IMR-90 (cell line): ENCODE measurements at regions of chrX and their contacts with region 1.

Region 1: DNA sequence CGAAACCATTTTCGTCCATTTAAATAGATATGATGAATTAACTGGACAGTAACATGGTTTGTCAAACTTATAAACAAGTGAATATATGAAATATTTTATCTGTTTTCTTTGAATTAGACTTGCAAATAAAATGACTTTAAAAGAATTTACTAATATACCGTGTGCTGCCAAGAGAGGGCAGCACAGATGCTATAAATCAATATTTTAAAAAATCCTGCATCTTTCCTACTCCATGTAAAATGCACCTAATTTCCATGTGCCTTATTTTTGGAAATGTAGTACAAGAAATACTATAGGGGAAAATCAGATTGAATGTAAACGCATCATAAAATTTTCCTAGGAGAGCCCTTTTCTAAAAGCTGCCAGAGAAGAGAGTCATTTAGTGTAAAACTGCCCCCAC is 62.2 kb downstream of the PRKX start:
- DNase-seq: peak; percentile 49
- ATAC-seq: peak; percentile 72
- H3K4me3 ChIP-seq: no peak overlapping the region
- H3K27ac ChIP-seq: no peak overlapping the region
- H3K4me1 ChIP-seq: no peaks in the 10 kb centered on the region
- H3K27me3 ChIP-seq: no peaks in the 10 kb centered on the region
- CTCF ChIP-seq: peak; percentile 64
- POLR2A ChIP-seq: no peak
- RAD21 ChIP-seq: peak; percentile 49

Region 2: DNA sequence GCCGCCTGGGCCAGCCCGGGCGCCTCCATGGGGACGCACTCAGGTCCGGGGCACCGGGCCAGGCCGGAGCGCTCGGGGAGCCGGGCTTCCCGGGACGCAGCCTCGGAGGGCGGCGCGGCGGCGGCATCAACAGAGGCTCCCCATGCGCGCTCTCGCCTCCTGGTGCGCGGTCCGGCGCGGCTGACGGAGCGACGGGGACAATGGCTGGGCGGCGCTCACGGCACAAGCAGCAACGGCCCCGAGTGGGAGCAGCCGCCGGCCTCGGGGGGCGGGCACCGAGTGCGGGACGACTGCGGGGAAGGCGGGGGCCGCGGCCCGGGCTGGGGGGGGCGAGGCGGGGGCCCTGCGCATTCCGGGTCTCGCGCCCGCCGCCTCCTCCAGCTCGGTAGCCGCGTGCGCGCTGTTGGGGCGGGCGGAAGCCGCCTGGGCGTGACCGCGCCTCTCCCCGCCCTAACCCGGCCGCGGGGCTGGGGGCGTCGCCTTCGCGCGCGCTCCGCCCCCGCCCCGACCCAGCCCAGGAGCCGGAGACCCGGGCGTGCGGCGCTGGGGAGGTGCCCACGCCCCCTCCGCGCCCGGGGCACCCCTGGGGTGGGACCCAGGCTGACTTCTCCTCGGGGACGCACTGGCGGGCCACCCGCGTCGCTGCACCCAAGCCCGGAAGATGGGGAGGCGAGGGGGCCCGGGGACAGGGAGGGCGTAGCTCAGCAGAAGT is 62.1 kb after region 1 on chrX and contains the start of gene PRKX:
- CTCF ChIA-PET with region 1: no interaction called
- POLR2A ChIA-PET with region 1: no interaction called
- dilution Hi-C with region 1: no loop called
- in situ Hi-C with region 1: no loop called
- intact Hi-C with region 1: loop called (anchors 2 kb)
- DNase-seq: peak; percentile 36
- ATAC-seq: peak; percentile 94
- H3K4me3 ChIP-seq: peak within 1 kb of the TSS; percentile 90
- H3K27ac ChIP-seq: peak within 1 kb of the TSS; percentile 67
- H3K4me1 ChIP-seq: no peaks in the 10 kb centered on the region
- H3K27me3 ChIP-seq: no peaks in the 10 kb centered on the region
- CTCF ChIP-seq: no peak
- POLR2A ChIP-seq: no peak
- RAD21 ChIP-seq: no peak
- total RNA-seq, gene PRKX: 13.1 and 14.9 TPM in 2 replicates

Region 3: GRCh38 chrX:3743801-3744439 is 92.6 kb after region 1 on chrX:
- CTCF ChIA-PET with region 1: no interaction called
- POLR2A ChIA-PET with region 1: no interaction called
- dilution Hi-C with region 1: no loop called
- in situ Hi-C with region 1: no loop called
- intact Hi-C with region 1: loop called (anchors 10 kb)
- DNase-seq: no peak
- ATAC-seq: no peak
- H3K4me3 ChIP-seq: no peak overlapping the region
- H3K27ac ChIP-seq: no peak overlapping the region
- H3K4me1 ChIP-seq: peaks cover 2% of the 10 kb centered on the region; the same call in 1 of the 2 replicates
- H3K27me3 ChIP-seq: no peaks in the 10 kb centered on the region
- CTCF ChIP-seq: no peak
- POLR2A ChIP-seq: no peak
- RAD21 ChIP-seq: no peak

Region 4: GRCh38 chrX:3788509-3789233 is 137.4 kb after region 1 on chrX:
- CTCF ChIA-PET with region 1: no interaction called
- POLR2A ChIA-PET with region 1: no interaction called
- dilution Hi-C with region 1: no loop called
- in situ Hi-C with region 1: no loop called
- intact Hi-C with region 1: loop called (anchors 10 kb)
- DNase-seq: no peak
- ATAC-seq: no peak
- H3K4me3 ChIP-seq: no peak overlapping the region
- H3K27ac ChIP-seq: no peak overlapping the region
- H3K4me1 ChIP-seq: no peaks in the 10 kb centered on the region
- H3K27me3 ChIP-seq: peaks cover 8% of the 10 kb centered on the region
- CTCF ChIP-seq: no peak
- POLR2A ChIP-seq: no peak
- RAD21 ChIP-seq: no peak

Region 5: DNA sequence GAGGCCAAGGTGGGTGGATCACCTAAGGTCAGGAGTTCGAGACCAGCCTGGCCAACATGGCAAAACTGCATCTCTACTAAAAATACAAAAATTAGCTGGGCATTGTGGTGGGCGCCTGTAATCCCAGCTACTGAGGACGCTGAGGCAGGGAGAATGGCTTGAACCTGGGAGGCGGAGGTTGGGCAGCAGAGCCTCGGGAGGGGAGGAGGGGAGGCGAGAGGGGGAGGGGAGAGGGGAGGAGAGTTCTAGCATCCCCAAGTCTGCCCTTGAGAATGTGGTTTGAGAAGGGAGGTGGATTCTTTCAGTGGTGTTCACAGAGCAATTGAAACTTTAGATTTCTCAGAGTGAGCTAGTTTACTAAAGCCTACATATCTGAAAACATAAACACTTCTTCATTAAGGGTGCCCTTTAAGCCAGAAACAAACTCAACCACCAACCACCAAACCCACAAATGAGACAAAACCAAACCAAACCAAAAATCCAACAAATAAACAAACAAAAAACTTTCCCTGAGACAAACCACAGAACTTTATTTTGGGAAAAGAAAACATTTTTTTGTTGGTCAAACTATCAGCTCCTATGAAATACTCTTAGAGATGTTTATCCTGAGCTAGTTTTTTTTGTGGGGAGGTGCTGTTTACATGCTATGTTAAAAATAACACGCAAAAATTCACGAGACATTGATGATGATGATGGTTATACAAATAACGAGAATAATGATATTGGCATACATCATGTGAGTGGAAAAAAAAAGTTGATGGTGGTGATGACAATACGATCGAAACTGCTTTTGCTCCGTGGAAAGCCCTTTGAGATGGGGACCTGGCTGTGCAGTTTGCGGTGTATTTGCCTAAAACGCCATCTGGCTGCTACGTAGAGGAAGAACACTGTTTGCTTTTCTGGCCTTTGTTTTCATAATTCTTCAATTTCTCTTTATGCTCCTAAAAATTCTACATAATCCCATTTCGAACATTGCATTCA is 160.3 kb after region 1 on chrX:
- CTCF ChIA-PET with region 1: interaction called, 4 read pairs
- POLR2A ChIA-PET with region 1: no interaction called
- dilution Hi-C with region 1: no loop called
- in situ Hi-C with region 1: loop called (anchors 10 kb)
- intact Hi-C with region 1: loop called (anchors 2 kb)
- DNase-seq: peak; percentile 58
- ATAC-seq: no peak
- H3K4me3 ChIP-seq: no peak overlapping the region
- H3K27ac ChIP-seq: no peak overlapping the region
- H3K4me1 ChIP-seq: no peaks in the 10 kb centered on the region
- H3K27me3 ChIP-seq: peaks cover 12% of the 10 kb centered on the region
- CTCF ChIP-seq: peak; percentile 69
- POLR2A ChIP-seq: no peak
- RAD21 ChIP-seq: peak; percentile 66